Activated B cell treated with CpG ODN at 0.5 μM for 24 hours (primary cell): ENCODE measurements at regions of chr10 and their contacts with region 1.

Region 1: GRCh38 chr10:97292097-97292862 is at the start of gene ARHGAP19:
- DNase-seq: peak; percentile 73
- ATAC-seq: peak; percentile 98
- H3K4me3 Mint-ChIP-seq: peak within 1 kb of the TSS; percentile 92
- H3K27ac Mint-ChIP-seq: peak within 1 kb of the TSS; percentile 85
- H3K4me1 Mint-ChIP-seq: peaks cover 19% of the 10 kb centered on the region
- H3K27me3 Mint-ChIP-seq: peaks cover 1% of the 10 kb centered on the region
- CTCF ChIP-seq: no peak
- total RNA-seq, gene ARHGAP19: 14.7 and 17.8 TPM in 2 replicates

Region 2: DNA sequence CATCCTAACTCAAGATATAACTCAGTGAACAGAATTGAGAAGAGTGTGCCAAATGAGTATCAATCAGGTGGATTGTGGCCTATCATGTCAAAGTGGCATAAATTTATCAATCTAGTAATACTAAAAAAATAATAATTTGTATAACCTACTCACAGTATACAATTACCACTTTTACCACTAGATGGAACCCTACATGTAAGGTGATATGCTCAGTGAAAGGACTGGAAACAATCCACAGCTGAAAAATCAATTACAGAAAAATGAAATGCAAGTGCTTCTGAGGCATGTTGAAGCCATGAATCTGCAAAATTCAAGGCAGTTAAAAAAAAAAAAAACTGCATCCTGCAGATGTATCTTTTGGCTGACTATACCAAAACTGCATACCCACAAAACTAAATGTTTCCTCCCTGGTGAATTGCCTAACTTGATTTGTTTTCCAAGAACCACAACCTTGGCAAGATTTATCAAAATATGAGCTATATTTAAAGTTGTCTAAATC is 13.7 kb before region 1 on chr10:
- CTCF ChIA-PET with region 1: interaction called, 5 read pairs
- POLR2A ChIA-PET with region 1: interaction called, 16 read pairs
- intact Hi-C with region 1: loop called (anchors 2 kb)
- DNase-seq: no peak
- ATAC-seq: peak; percentile 67
- H3K4me3 Mint-ChIP-seq: no peak overlapping the region
- H3K27ac Mint-ChIP-seq: no peak overlapping the region
- H3K4me1 Mint-ChIP-seq: peaks cover 20% of the 10 kb centered on the region
- H3K27me3 Mint-ChIP-seq: no peaks in the 10 kb centered on the region
- CTCF ChIP-seq: peak; percentile 49

Region 3: GRCh38 chr10:97307866-97308780 is 15.8 kb after region 1 on chr10:
- CTCF ChIA-PET with region 1: no interaction called
- POLR2A ChIA-PET with region 1: no interaction called
- intact Hi-C with region 1: no loop called
- DNase-seq: no peak
- ATAC-seq: no peak
- H3K4me3 Mint-ChIP-seq: no peak overlapping the region
- H3K27ac Mint-ChIP-seq: no peak overlapping the region
- H3K4me1 Mint-ChIP-seq: no peaks in the 10 kb centered on the region
- H3K27me3 Mint-ChIP-seq: no peaks in the 10 kb centered on the region
- CTCF ChIP-seq: no peak

Region 4: GRCh38 chr10:97318772-97319651 is 26.7 kb after region 1 on chr10 and contains the start of gene FRAT1:
- CTCF ChIA-PET with region 1: no interaction called
- POLR2A ChIA-PET with region 1: interaction called, 3 read pairs
- intact Hi-C with region 1: loop called (anchors 1 kb)
- DNase-seq: peak; percentile 91
- ATAC-seq: peak; percentile 66
- H3K4me3 Mint-ChIP-seq: peak within 1 kb of the TSS; percentile 92
- H3K27ac Mint-ChIP-seq: peak within 1 kb of the TSS; percentile 100
- H3K4me1 Mint-ChIP-seq: peaks cover 30% of the 10 kb centered on the region
- H3K27me3 Mint-ChIP-seq: no peaks in the 10 kb centered on the region
- CTCF ChIP-seq: no peak
- total RNA-seq, gene FRAT1: 6.9 TPM in 2 replicates

Region 5: DNA sequence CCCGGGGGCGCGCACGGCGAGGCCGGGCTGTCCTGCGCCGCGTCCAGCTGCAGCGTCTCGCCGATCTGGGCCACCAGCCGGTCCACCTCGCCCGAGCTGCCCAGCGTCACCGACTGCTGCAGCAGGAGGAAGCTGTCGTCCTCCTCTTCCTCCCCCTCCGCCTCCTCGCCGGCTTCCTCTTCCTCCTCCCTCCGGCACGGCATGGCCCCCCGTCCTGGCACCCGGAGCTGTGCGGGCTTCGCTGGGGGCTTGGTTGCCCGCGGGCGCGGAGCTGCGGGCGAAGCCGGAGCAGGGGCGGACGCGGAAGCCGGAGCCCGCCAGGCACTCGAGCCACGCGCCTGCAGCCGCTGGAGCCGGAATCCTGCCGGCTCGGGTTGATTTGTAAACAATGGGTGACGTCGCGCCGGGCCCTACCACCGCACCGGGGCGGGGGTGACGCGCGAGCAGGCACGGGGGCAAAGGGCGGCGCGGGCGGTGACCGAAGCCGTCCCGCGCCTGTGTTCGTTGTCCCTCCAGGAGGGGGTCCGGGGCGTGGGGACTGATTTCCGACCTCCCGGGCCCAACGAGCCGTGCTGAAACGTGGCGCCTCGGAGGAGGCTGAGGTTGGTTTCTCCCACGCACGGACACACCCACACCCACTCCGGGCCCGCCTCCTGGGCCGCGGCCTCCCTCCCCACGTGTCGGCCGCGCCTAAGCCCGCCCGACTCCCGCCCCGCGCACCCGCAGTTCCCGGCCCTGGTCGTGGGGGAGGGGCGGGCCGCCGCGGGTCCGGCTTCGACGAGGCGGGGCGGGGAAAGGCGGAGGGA is 42.3 kb after region 1 on chr10 and contains the start of gene FRAT2:
- CTCF ChIA-PET with region 1: no interaction called
- POLR2A ChIA-PET with region 1: interaction called, 4 read pairs
- intact Hi-C with region 1: loop called (anchors 1 kb)
- DNase-seq: peak; percentile 90
- ATAC-seq: peak; percentile 91
- H3K4me3 Mint-ChIP-seq: peak within 1 kb of the TSS; percentile 87
- H3K27ac Mint-ChIP-seq: peak within 1 kb of the TSS; percentile 92
- H3K4me1 Mint-ChIP-seq: peaks cover 46% of the 10 kb centered on the region
- H3K27me3 Mint-ChIP-seq: no peaks in the 10 kb centered on the region
- CTCF ChIP-seq: no peak
- total RNA-seq, gene FRAT2: 9.7 and 10.9 TPM in 2 replicates

Region 6: GRCh38 chr10:97425964-97426775 is 133.9 kb after region 1 on chr10 and contains the start of gene PGAM1:
- CTCF ChIA-PET with region 1: no interaction called
- POLR2A ChIA-PET with region 1: no interaction called
- intact Hi-C with region 1: loop called (anchors 1 kb)
- DNase-seq: peak; percentile 97
- ATAC-seq: peak; percentile 88
- H3K4me3 Mint-ChIP-seq: peak within 1 kb of the TSS; percentile 92
- H3K27ac Mint-ChIP-seq: peak within 1 kb of the TSS; percentile 94
- H3K4me1 Mint-ChIP-seq: peaks cover 43% of the 10 kb centered on the region
- H3K27me3 Mint-ChIP-seq: no peaks in the 10 kb centered on the region
- CTCF ChIP-seq: no peak
- total RNA-seq, gene PGAM1: 162 and 166 TPM in 2 replicates

Region 7: DNA sequence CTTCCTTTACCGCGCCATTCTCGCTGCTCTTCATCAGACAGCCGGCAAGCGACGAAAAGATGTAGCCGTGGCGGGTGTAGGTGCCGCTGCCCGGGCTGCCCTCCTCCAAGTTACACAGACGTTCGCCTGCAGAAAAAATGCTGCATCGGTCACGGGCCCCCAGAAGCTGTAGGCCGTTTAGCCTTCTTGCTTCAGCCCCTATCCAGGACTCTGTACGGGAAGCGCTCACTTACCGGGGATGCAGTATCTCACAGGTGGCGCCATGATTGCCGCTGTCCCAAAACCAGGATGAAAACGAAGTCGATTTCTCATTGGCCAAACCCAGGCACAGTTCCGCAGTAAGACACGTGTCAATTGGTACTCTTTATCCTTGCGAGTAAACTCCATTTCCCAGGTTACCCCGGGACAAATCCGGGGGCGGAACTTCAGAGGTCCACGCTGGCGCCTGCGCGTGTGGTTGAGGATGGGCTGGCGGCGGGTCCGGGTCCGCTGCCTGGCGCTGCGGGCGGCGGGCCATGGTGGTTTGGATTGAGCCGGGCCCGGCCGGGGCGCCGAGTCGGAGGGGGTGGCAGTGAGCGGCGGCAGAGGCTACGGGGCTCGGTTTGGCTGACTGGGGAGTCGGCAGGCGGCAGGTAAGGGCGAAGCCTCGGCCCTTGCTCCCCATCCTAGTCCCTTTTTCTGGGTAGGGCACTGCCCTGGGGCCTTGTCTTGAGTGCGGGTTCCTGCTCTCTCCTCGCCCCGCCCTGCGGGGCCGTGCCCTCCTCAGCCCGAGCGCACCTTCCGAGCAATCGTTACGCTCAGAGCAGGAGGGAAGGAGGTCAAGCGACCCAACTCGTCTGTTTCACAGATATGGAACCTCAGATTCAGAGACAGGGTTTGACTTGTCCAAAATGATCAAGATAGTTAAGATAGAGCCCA is 153.7 kb after region 1 on chr10 and contains the starts of genes EXOSC1 and ZDHHC16:
- CTCF ChIA-PET with region 1: no interaction called
- POLR2A ChIA-PET with region 1: no interaction called
- intact Hi-C with region 1: loop called (anchors 1 kb)
- DNase-seq: peak; percentile 80
- ATAC-seq: peak; percentile 98
- H3K4me3 Mint-ChIP-seq: peak within 1 kb of the TSS; percentile 99
- H3K27ac Mint-ChIP-seq: peak within 1 kb of the TSS; percentile 93
- H3K4me1 Mint-ChIP-seq: peaks cover 43% of the 10 kb centered on the region
- H3K27me3 Mint-ChIP-seq: no peaks in the 10 kb centered on the region
- CTCF ChIP-seq: no peak
- total RNA-seq, gene EXOSC1: 47.4 and 53.8 TPM in 2 replicates
- total RNA-seq, gene ZDHHC16: 39.0 and 40.6 TPM in 2 replicates

Region 8: DNA sequence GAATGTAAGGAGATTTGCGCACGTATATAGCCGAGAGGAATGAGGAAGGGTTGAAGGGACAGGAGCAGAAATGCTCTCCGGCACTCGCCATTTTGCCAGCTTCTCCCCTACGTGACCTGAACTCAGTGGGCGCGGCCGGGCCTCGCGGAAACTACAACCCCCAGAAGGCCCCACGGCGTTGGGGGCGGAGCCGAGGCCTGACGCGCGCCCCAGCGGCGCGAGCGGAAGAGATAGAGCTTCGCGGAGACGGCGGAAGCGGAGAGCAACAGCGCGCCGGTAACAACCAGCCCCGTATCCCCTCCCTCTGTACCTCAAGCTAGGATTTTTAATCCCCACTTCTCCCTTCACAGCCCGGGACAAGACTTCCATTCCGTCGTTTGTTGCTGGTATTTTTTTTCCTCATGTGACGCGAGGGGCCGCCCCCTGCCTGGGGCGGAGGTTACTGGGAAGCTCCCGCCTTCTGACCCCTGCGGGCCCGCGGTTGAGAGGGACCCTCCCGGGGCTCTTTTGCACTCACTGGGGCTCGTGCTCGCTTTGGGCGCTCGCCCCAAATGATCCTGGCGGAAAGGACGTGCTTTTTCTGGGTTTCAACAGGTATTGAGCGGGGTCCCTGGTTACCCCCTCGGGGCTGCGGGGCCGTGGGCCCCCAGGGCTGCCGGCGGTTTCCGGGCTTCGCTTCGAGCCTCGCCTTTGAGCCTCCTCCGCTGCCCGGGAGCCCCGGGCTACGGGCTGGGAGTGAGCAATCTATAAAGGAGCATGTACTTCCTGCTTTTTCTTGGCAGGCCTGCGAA is 842.3 kb after region 1 on chr10 and contains the start of gene R3HCC1L:
- CTCF ChIA-PET with region 1: no interaction called
- POLR2A ChIA-PET with region 1: no interaction called
- intact Hi-C with region 1: loop called (anchors 5 kb)
- DNase-seq: peak; percentile 93
- ATAC-seq: peak; percentile 91
- H3K4me3 Mint-ChIP-seq: peak within 1 kb of the TSS; percentile 94
- H3K27ac Mint-ChIP-seq: peak within 1 kb of the TSS; percentile 97
- H3K4me1 Mint-ChIP-seq: peaks cover 63% of the 10 kb centered on the region
- H3K27me3 Mint-ChIP-seq: no peaks in the 10 kb centered on the region
- CTCF ChIP-seq: no peak
- total RNA-seq, gene R3HCC1L: 24.4 and 24.9 TPM in 2 replicates